CD8-positive, alpha-beta T cell (primary cell): ENCODE measurements at regions of chr10 and their contacts with region 1.

Region 1: DNA sequence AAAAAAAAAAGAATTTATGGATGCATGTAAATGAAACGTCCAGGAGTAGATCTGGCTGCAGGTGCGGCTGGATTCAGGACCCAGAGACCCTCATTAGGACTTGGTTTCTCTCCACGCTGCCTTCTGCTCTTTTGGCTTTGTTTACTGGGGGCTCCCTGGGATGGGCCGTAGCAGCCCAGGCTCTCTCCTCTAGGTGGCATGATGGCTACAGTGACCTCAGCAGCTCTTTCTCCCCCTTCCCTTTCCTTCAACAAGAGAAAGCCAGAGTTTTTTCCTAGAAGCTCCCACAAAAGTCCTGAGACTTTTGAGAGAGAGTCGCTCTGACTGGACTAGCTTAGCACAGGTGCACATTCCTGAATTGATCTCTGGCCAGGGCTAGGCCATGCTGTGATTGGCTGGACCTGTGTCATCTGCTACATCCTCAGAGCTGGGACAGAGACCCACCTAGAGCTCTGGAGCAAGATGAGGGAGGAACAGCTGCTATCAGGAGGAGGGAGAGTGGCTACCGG is 67.8 kb upstream of the PDCD4 start:
- DNase-seq: peak in 7 of 9 experiments; percentile 22 to 79 (median 54)
- ATAC-seq: peak; percentile 51
- H3K4me3 ChIP-seq: no peak overlapping the region
- H3K4me3 Mint-ChIP-seq: peak overlapping the region; percentile 59
- H3K27ac ChIP-seq: peak overlapping the region in 1 of 2 experiments; percentile 44
- H3K27ac Mint-ChIP-seq: peak overlapping the region; percentile 89
- H3K4me1 ChIP-seq: peaks cover 32% of the 10 kb centered on the region
- H3K4me1 Mint-ChIP-seq: peaks cover 40% of the 10 kb centered on the region
- H3K27me3 ChIP-seq: no peaks in the 10 kb centered on the region
- H3K27me3 Mint-ChIP-seq: no peaks in the 10 kb centered on the region
- CTCF ChIP-seq: peak; percentile 58

Region 2: GRCh38 chr10:110783509-110784107 is 20.3 kb before region 1 on chr10:
- CTCF ChIA-PET with region 1: interaction called, 9 read pairs
- POLR2A ChIA-PET with region 1: interaction called, 3 read pairs
- intact Hi-C with region 1: loop called in 1 of 2 experiments (anchors 2 kb)
- DNase-seq: peak; percentile 42 to 91 (median 73)
- ATAC-seq: peak; percentile 87
- H3K4me3 ChIP-seq: no peak overlapping the region
- H3K4me3 Mint-ChIP-seq: peak overlapping the region; percentile 40
- H3K27ac ChIP-seq: peak overlapping the region; percentile 40 to 67
- H3K27ac Mint-ChIP-seq: peak overlapping the region; percentile 94
- H3K4me1 ChIP-seq: peaks cover 21% of the 10 kb centered on the region
- H3K4me1 Mint-ChIP-seq: peaks cover 46% of the 10 kb centered on the region
- H3K27me3 ChIP-seq: no peaks in the 10 kb centered on the region
- H3K27me3 Mint-ChIP-seq: no peaks in the 10 kb centered on the region
- CTCF ChIP-seq: no peak

Region 3: DNA sequence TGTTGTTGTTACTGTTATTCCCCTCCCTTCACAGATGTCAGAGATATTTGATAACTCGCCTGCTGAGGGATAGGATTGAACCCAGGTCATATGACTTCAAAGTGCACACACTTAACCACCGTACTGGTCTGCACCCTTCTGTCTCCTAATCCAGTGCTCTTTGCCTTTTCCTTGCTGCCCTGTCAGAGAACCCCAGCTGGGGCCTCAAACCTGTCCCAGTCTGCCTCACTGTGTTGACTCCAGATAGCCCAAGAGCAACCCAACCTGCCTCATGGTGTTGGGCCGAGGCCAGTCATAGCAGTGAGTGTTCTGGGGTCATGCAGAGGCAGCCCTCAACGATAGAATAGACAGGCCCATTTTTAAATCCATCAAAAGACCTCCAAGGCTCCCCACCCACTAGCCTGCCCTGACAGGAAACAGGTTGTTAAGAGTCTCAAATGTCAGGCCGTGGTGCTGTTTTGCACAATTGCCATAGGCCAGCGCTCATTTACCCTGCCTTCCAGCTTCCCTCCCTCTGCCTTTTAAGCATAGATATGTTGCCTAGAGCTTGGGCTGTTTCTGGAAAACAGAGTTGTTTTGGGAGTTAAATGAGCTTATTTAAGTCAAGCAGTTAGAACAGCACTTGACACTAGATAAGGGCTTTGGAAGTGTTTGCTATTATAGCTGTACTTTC is 30.9 kb after region 1 on chr10:
- CTCF ChIA-PET with region 1: interaction called, 13 read pairs
- POLR2A ChIA-PET with region 1: interaction called, 3 read pairs
- intact Hi-C with region 1: loop called in 1 of 2 experiments (anchors 5 kb)
- DNase-seq: peak in 7 of 9 experiments; percentile 22 to 77 (median 55)
- ATAC-seq: peak; percentile 89
- H3K4me3 ChIP-seq: no peak overlapping the region
- H3K4me3 Mint-ChIP-seq: peak overlapping the region; percentile 53
- H3K27ac ChIP-seq: peak overlapping the region; percentile 38 to 41
- H3K27ac Mint-ChIP-seq: peak overlapping the region; percentile 97
- H3K4me1 ChIP-seq: peaks cover 37% of the 10 kb centered on the region
- H3K4me1 Mint-ChIP-seq: peaks cover 43% of the 10 kb centered on the region
- H3K27me3 ChIP-seq: no peaks in the 10 kb centered on the region
- H3K27me3 Mint-ChIP-seq: no peaks in the 10 kb centered on the region
- CTCF ChIP-seq: no peak

Region 4: DNA sequence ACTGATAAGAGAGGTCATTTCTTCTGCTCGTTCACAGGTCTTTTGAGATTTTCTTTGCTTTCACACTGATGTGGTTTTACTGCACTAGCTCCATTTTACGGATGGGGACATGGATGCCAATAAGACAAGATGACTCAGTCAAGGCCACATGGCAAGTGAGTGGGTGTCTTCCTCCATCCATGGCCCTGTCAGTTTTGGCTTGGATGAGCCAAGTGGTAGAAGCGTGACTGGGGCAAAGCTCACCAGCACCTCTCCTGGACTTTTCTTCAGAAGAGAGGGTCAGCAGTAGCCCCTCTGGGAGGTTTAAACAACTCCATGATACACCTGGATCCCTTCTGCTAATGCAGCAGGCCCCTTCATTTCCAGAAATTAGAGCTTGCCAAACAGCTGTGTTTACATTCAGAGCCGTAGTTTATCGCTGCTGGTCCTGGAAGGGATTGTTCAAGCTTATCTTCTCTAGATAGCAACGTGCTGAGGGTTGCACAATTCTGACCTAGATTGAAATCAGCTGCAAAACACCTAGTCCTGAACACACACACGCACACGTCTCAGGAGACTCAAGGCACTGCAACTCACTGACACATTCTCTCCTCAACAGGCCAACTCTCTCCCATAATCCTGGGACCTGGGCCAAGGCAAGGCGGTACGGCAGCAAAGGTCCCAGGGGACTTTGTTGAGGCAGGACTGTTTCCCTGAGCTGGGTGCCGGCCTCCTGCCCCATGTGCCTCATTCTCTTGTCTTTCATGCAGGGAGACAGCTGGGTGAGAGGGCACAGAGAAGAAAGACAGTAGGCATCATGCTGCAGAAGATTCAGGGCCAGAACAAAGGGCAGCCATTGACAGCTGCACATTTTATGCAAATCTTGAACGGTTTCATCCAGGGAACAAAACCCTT is 53.6 kb after region 1 on chr10:
- CTCF ChIA-PET with region 1: interaction called, 15 read pairs
- POLR2A ChIA-PET with region 1: interaction called, 13 read pairs
- intact Hi-C with region 1: no loop called
- DNase-seq: peak in 3 of 9 experiments; percentile 16 to 62 (median 47)
- ATAC-seq: peak; percentile 9
- H3K4me3 ChIP-seq: no peak overlapping the region
- H3K4me3 Mint-ChIP-seq: no peak overlapping the region
- H3K27ac ChIP-seq: peak overlapping the region in 1 of 2 experiments; percentile 97
- H3K27ac Mint-ChIP-seq: peak overlapping the region; percentile 98
- H3K4me1 ChIP-seq: peaks cover 75% of the 10 kb centered on the region
- H3K4me1 Mint-ChIP-seq: peaks cover 86% of the 10 kb centered on the region
- H3K27me3 ChIP-seq: no peaks in the 10 kb centered on the region
- H3K27me3 Mint-ChIP-seq: no peaks in the 10 kb centered on the region
- CTCF ChIP-seq: no peak

Region 5: DNA sequence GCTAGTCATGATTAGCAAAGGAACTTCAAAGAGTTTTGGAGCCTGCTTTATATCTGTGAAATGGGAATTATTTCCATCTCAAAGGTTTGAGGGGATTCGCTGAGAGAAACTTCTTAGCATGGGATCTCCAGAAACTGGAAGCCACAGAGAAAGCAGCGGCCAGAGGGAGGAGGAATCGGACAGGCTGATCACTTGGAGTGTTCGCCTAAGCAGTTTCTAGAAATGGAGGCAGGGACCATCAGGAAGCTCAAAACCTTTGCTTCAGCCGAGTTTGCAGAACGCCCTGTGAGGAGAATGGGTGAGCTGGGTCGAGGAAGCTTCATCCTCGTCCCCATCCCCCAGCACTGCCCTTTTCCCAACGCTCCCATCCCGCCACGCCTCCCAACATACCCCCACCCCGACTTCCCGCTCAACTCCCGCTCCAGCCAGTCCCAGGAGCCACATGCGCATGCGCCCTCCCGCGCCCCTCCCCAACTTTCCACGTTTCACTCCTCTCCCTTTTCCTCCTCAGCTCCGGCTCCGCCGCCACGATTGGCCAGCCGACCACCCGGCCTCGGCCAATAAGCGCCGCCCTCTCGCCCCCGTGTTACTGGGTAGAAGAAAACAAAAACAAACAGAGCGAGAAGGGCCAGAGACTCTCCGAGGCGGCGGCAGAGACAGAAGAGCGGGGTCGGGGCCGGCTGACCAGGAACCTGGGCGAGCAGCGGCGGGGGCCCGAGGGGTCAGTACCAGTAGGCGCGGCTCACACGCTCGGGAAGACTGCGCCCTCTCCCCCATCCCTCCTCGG is 67.6 kb after region 1 on chr10 and contains the start of gene PDCD4:
- CTCF ChIA-PET with region 1: interaction called, 28 read pairs
- POLR2A ChIA-PET with region 1: interaction called, 13 read pairs
- intact Hi-C with region 1: loop called (anchors 1 to 2 kb)
- DNase-seq: peak; percentile 87 to 96 (median 94)
- ATAC-seq: peak; percentile 58
- H3K4me3 ChIP-seq: peak within 1 kb of the TSS; percentile 55 to 85
- H3K4me3 Mint-ChIP-seq: peak within 1 kb of the TSS; percentile 89
- H3K27ac ChIP-seq: peak within 1 kb of the TSS; percentile 78 to 97
- H3K27ac Mint-ChIP-seq: peak within 1 kb of the TSS; percentile 98
- H3K4me1 ChIP-seq: peaks cover 71% of the 10 kb centered on the region
- H3K4me1 Mint-ChIP-seq: peaks cover 67% of the 10 kb centered on the region
- H3K27me3 ChIP-seq: no peaks in the 10 kb centered on the region
- H3K27me3 Mint-ChIP-seq: no peaks in the 10 kb centered on the region
- CTCF ChIP-seq: no peak
- total RNA-seq, gene PDCD4: 672 to 688 TPM